ENCODE measurements at regions of chr7 and their contacts with region 1.

Region 1: GRCh38 chr7:33754933-33755928 is 150.1 kb upstream of the BMPER start:
- DNase-seq: no peak
- H3K27ac ChIP-seq: no peak overlapping the region
- CTCF ChIP-seq: no peak

Region 2: DNA sequence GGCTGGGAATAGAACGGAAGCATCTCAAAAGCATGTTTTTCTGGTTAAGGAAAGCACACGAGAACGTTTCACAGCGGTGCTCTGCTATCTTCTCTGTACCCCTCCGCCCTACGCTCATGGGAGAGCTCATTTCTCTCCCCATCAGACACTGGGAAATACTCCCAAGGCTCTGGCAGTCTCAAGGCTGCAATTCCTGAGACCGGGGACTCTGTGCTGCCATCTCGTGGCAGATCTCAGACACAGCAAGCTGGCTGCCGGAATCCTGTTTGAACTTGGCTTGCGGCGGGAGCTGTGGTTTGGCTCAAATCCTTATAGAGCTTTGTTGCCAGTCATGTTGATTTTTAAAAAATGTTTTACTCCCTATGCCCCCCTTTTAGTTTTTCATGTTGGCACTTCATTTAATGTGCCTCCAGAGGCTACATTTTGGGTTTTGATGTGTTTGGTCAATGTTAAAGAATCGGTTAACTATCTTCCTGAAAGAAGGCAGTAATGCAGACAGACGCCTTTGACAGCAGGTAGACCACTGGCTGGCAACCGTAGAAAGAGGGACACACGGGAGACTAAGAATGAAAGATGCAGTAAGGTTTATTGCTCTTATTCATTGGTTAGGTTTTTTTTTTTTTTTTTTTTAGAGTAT is 177.7 kb after region 1 on chr7:
- CTCF ChIA-PET with region 1: interaction called, 11 read pairs
- POLR2A ChIA-PET with region 1: no interaction called
- DNase-seq: peak; percentile 73
- H3K27ac ChIP-seq: no peak overlapping the region
- CTCF ChIP-seq: peak; percentile 98

Measured in RWPE1 (cell line).